ENCODE measurements at regions of chr11 and their contacts with region 1.

Region 1: DNA sequence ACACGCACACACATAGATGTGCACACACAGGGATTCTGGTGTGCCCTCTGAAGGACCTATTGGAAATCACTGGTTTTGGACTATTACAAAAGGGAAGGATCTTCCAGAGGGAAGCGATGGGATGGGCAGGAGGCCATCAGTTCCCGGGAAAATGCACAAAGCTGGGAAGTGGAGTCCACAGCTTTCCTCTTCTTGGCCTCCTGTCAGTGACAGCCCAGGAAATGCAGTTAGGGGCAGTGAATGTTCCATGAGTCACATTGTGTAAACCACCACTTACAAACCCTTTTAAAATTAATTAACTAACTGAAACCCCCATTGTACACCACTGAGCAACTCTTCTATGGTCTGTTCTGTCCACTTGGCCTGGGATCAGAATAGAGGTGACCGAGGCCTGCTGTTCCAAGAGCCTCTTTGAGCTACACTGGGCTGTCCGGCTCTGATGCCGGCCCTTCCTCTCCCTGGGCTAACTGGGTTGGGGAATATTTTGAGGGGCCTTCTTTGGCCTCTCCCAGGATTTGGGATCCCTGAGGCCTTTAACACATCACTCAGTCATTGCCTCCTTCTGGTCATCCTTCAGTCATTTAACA is 137.7 kb downstream of the FEZ1 start:
- DNase-seq: no peak
- H3K4me3 ChIP-seq: no peak overlapping the region
- H3K27ac ChIP-seq: peak overlapping the region in 17 of 59 donors; percentile 1 to 62 (median 36)
- H3K27me3 ChIP-seq: no peaks in the 10 kb centered on the region
- CTCF ChIP-seq: no peak

Region 2: DNA sequence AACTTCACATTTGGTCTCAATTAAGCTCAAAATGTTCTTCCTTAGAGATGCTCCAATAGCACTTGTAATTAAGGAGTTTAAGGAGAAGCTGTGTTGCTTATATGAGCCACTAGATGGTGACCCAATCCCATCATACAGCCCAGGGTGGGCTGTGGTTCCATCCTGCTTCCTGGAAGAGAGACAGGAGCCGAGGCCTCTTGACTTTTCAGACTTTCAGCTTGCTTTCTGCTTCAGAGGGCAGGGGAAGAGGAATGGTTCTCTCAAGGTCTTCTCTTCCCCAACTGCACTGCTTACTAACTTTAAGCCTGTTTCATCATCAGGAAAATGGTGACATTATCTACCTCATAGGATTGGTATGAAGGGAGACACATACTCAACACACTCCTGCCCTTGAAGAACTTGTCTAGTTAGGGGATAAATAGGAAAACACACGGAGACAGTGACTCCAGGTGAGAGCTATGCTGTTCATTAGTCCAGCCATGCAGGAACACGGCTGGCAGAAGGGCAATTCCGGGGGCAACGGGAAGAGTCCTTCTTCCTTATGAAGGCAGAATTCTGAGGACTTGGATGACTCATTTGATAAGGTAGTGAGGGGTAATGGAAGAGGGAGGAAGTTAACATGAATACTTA is 267.0 kb before region 1 on chr11:
- intact Hi-C with region 1: loop called in 1 of 2 experiments (anchors 10 kb)
- DNase-seq: peak in 3 of 10 donors; percentile 37 to 65 (median 50)
- H3K4me3 ChIP-seq: no peak overlapping the region
- H3K27ac ChIP-seq: peak overlapping the region in 6 of 59 donors; percentile 1 to 52 (median 17)
- H3K27me3 ChIP-seq: no peaks in the 10 kb centered on the region
- CTCF ChIP-seq: peak; percentile 48 to 86 (median 70)

Region 3: DNA sequence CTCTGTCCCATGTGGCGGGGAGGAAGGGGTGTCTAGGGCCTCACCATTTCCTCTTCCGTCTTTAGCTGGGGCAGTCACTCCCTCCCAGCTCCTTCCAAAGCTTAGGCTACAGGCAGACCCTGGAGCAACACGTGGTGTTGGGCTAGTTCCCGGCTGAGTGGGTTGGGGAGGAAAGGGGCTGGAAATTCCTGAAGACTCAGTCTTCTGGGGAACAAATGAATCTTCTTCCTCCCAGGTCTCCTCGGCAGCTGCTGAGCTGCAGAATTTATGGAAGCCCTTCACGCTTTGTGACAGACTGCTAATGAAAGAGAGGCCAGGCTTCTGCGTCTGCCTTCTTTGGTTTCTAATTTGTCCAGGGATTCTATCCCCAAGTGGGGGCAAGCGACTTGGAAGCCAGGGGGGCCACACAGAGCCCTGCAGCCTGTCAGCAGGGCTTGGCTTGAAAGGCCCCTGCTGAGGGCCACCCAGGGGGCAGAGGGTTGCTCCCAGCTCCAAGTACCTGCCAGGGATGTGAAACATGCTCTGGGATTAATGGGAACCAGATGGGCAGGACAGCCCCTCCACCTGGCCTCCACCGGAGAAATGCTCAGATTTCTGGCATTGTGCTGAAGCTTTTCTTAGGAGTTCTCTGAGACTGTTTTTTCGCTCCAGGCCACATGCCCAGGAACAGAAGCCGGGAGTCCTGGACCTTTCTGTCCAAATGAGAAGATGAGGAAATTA is 70.7 kb before region 1 on chr11:
- intact Hi-C with region 1: no loop called
- DNase-seq: peak in 1 of 10 donors; percentile 58
- H3K4me3 ChIP-seq: no peak overlapping the region
- H3K27ac ChIP-seq: peak overlapping the region in 49 of 59 donors; percentile 5 to 87 (median 54)
- H3K27me3 ChIP-seq: no peaks in the 10 kb centered on the region
- CTCF ChIP-seq: no peak

Region 4: GRCh38 chr11:125410091-125410490 is 51.7 kb after region 1 on chr11:
- intact Hi-C with region 1: no loop called
- DNase-seq: peak in 1 of 10 donors; percentile 23
- H3K4me3 ChIP-seq: no peak overlapping the region
- H3K27ac ChIP-seq: peak overlapping the region in 6 of 59 donors; percentile 54 to 84 (median 74)
- H3K27me3 ChIP-seq: no peaks in the 10 kb centered on the region
- CTCF ChIP-seq: no peak

Region 5: DNA sequence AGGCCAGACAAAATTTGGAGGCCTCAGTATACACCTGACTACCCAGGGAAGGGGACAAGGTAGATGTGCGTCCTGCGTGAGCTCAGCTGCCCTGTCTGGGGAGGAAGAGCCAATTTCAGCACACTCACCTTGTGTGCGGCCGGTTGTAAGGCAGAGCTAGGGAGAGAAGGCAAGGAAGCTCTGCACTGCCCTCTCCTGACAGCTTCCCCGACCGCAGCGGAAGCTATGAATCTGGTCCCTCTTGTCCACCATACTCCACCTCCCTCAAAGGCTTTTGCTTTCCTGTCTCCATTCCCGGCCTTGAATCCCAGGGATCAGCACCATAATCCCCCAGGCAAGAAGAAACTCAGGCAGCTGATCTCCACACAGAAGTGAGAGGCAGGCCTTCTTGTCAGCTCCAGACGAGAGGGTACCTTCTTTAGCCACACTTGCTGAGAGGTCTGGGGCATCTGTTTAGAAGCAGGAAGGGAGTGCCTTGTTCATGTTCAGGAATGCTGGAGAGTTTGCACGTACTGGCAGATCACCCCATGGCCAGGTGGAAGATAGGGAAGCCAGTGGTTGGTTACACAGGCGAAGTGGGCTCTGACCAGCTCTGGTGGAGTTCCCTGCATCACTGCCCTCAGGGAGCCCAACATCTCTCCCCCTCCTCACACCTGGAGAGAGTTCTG is 75.2 kb after region 1 on chr11:
- intact Hi-C with region 1: no loop called
- DNase-seq: peak; percentile 58 to 86 (median 79)
- H3K4me3 ChIP-seq: peak overlapping the region in 8 of 59 donors; percentile 11 to 46 (median 20)
- H3K27ac ChIP-seq: peak overlapping the region in 57 of 59 donors; percentile 15 to 90 (median 73)
- H3K27me3 ChIP-seq: no peaks in the 10 kb centered on the region
- CTCF ChIP-seq: peak; percentile 12 to 78 (median 64)

Measured in dorsolateral prefrontal cortex (tissue), 120 donors.